ENCODE measurements at regions of chr17 and their contacts with region 1.

Region 1: DNA sequence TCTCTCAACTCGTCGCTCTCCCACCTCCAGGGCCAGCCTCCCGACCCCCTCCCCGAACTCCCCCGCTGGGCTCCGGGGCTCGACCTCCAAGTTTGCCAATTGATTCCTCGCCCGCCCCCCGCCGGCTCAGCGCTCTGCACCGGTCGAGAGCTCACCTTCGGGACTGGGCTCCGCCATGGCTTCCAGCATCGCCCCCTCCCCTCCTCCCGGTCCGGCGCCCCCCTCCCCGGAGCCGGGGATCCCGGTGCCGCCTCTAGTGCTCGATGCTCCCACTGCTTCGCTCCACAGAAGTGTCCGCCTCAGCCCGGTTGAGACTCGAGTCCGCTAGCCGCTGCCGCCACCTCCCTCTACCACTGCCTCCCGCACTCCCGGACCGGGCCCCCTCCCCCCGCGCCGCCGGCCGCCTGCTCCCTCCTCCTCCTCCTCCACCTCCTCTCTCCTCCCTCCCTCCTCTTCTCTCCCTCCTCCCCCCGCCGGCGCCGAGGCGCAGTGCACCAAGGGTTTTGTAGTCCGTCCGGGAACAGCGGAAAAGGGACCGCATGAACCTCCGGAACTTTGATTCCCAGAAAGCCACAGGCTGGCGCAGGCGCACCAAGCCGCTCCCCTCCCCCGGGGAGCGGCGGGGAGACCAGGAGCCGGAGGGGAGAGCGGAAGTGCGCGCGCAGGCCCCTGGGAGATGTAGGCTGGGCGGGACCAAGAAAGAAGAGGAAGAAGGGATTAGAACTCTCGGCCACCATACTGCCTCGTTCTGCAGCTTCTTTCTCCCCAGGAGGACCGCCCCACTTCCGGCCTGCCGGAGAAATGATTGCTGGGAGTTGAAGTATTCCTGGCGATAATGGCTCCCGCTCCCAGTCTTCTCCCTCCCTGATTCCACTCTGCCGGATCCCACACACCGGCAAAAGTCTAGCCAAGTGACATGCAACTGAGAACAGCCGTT is at the start of gene PHF23:
- DNase-seq: peak; percentile 98
- H3K4me3 ChIP-seq: peak within 1 kb of the TSS; percentile 97
- H3K27me3 ChIP-seq: no peaks in the 10 kb centered on the region
- CTCF ChIP-seq: no peak
- polyA plus RNA-seq, gene PHF23: 59.0 and 72.8 TPM in 2 replicates

Region 2: GRCh38 chr17:5405400-5405799 is 1834.0 kb before region 1 on chr17:
- CTCF ChIA-PET with region 1: no interaction called
- POLR2A ChIA-PET with region 1: interaction called, 14 read pairs
- DNase-seq: no peak
- H3K4me3 ChIP-seq: no peak overlapping the region
- H3K27me3 ChIP-seq: no peaks in the 10 kb centered on the region
- CTCF ChIP-seq: no peak

Region 3: DNA sequence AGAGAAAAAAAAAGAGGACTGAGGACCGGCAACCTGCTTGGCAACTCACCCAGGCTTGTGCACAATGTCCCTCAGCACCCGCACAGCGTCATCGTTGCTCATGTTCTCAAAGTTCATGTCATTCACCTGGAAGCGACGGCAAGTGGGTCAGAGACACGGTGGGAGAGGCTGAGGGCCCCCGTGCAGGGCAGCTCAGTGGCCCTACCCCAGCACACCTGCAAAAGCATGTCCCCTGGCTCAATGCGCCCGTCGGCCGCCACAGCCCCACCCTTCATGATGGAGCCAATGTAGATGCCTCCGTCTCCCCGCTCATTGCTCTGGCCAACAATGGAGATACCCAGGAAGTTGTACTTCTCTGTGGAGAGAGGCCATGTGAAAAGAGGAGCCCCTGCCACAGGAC is 10.4 kb before region 1 on chr17:
- CTCF ChIA-PET with region 1: no interaction called
- POLR2A ChIA-PET with region 1: no interaction called
- DNase-seq: no peak
- H3K4me3 ChIP-seq: no peak overlapping the region
- H3K27me3 ChIP-seq: no peaks in the 10 kb centered on the region
- CTCF ChIP-seq: no peak

Region 4: DNA sequence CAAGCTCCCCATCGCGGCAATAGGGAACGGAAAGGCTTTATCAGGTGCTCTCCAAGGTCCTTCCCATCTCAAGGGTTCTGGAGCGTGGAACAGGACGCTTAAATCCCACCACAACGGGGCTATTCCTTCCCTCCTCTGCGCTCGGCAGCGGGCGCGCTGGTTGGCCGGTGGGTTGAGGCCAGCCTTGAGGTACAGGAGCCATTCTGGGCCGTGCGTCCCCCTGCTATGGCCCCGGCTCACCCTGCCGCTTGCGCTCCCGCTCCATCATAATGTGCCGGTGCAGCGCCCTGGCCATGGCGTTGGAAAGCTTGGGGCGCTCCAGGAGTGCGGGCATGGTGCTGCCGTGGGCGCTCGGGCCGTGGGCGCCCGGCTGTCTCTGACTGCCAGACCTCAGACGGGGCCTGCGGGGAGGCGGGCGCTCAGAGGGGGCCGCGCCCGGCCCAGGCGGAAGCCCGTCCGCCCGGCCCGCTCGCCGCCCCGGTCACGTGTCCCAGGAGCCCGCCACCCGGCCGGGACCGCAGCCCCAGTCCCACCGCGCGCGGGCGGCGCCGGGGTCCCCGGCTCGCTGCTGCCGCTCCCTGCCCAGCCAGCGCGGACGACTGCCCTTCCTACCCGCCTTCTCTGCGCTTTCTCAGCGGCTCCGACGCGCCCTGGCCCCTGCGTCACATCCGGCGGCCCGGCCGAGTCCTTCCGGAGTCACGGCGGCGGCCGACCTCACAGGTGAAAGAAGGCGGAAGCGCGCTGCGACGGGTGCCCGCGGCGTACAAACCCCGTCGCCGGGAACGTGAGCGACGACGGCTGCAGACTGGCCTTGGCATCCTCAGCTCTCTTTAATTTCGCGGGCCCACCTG is 75.6 kb after region 1 on chr17 and contains the start of gene GPS2:
- CTCF ChIA-PET with region 1: no interaction called
- POLR2A ChIA-PET with region 1: no interaction called
- DNase-seq: peak; percentile 20
- H3K4me3 ChIP-seq: peak within 1 kb of the TSS; percentile 91
- H3K27me3 ChIP-seq: no peaks in the 10 kb centered on the region
- CTCF ChIP-seq: no peak
- polyA plus RNA-seq, gene GPS2: 12.7 and 37.4 TPM in 2 replicates

Measured in BJ (cell line).